Activated CD4-positive, alpha-beta T cell treated with anti-CD3 and anti-CD28 coated beads, Interleukin-2, amount 10 ng/mL, durations not matched to agents 24 days and 14 days (primary cell): ENCODE measurements at regions of chr1 and their contacts with region 1.

Region 1: DNA sequence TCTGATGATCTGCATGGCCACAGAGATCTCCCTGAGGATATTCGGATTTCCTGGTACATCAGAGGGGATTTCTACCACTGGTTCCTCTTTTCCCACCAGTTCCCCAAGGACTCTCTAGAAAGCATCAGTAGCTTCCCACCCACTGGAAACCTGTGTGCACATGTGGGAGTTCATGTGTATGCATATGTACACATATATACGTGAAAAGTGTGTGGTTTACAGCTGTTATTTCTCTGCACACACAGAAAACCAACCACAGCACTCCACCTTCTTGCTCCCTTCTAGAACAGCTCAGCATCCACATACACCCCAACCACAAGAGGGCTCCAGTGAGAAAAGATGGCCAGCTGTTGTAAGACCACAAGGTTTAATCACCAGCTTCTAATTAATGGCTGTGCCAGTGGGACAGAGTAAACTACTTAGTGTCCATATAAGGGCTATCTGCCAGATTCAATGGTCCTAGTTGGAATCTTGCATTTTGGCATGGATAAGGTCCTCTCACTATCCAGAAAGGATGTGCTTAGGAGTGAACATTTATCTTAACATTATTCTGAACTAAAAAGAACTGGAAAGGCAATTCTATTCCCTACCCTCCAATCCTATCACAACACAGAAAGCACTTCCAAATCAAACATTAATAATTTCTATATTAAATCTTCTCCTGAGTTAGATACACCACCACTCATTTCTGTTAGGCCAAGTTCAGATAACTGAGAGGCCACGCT is 24.1 kb downstream of the GPR3 start:
- DNase-seq: peak; percentile 87
- H3K4me3 Mint-ChIP-seq: no peak overlapping the region
- H3K27ac Mint-ChIP-seq: peak overlapping the region; percentile 14
- H3K4me1 Mint-ChIP-seq: peaks cover 28% of the 10 kb centered on the region
- H3K27me3 Mint-ChIP-seq: no peaks in the 10 kb centered on the region

Region 2: GRCh38 chr1:27430903-27431600 is 14.5 kb after region 1 on chr1:
- intact Hi-C with region 1: loop called (anchors 2 kb)
- DNase-seq: peak; percentile 80
- H3K4me3 Mint-ChIP-seq: peak overlapping the region; percentile 66
- H3K27ac Mint-ChIP-seq: peak overlapping the region; percentile 80
- H3K4me1 Mint-ChIP-seq: peaks cover 55% of the 10 kb centered on the region
- H3K27me3 Mint-ChIP-seq: no peaks in the 10 kb centered on the region

Region 3: DNA sequence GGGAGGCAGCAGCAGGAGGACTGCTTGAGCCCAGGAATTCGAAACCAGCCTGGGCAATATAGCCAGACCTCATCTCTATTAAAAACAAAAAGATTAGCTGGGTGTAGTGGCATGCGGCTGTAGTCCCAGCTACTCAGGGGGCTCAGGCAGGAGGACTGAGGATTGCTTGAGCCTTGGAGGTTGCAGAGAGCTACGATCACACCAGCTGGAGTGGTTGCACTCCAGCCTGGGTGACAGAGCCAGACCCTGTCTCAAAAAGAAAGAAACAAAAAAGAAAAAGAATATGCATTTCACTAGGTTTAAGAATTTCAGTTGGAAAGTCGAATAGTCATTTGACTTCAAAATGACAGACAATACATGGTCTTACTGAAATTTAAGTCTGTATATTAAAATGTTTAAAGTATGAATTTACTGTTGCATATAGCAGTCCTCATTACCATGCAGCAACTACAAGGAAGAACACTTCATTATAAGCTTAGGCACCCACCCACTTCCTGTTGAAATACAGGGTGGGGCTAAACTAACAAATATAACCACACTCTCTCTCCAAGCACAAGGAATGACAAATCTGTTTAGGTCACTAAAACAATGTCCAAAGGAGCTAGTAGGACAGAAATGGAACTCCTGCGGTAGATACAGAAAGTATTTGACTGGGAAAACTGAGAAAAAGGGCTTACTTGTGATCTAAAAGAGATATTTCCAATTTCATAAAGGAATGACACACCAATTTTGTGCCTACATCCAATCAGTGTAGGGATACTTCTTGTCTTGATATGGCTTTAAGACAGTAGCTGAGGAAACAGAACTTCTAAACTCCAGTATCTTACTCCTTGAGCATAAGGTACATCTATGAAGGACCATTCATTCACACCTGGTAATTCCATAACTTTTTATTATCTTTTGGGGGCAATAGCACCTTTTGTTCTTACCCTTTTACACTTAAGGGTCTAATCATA is 19.9 kb after region 1 on chr1:
- intact Hi-C with region 1: loop called (anchors 2 kb)
- DNase-seq: peak; percentile 70
- H3K4me3 Mint-ChIP-seq: peak overlapping the region; percentile 68
- H3K27ac Mint-ChIP-seq: peak overlapping the region; percentile 80
- H3K4me1 Mint-ChIP-seq: peaks cover 59% of the 10 kb centered on the region
- H3K27me3 Mint-ChIP-seq: no peaks in the 10 kb centered on the region

Region 4: DNA sequence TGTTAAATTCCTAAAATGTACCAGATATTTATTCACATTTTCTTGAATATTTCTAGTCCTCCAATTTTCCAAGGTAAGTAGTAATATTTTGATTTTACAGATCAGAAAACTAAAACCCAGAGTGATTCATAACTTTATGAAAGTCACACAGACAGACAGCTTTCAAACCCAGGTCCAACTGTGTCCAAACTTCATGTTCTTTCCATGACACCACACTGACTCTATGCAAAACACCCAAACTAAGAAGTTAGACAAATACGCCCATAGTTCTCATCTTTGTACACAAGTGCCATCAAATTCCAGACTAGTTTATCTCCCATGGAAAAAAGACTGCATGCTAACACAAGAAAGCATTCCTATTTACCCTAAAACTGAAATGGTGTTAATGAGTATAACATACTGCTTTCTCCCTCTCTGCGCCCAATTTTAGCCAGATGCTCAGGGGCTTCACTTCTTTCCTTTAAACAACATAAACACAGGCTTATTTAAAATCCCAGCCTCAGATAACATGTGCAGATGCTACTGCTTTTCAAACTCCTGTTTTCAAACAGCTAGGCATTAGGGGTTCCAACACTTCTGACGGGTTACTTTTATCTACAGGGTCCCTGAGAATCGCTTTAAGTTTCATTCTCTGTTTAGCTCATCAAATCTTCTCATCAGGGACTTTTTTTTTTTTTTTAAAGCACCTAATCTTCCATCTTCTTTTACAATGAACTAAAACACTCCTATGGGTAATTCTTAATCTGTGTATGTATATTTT is 28.8 kb after region 1 on chr1:
- intact Hi-C with region 1: loop called (anchors 1 kb)
- DNase-seq: peak; percentile 63
- H3K4me3 Mint-ChIP-seq: peak overlapping the region; percentile 70
- H3K27ac Mint-ChIP-seq: peak overlapping the region; percentile 97
- H3K4me1 Mint-ChIP-seq: peaks cover 34% of the 10 kb centered on the region
- H3K27me3 Mint-ChIP-seq: no peaks in the 10 kb centered on the region

Region 5: GRCh38 chr1:27489910-27490741 is 73.6 kb after region 1 on chr1 and contains the start of gene WASF2:
- intact Hi-C with region 1: loop called (anchors 2 kb)
- DNase-seq: peak; percentile 99
- H3K4me3 Mint-ChIP-seq: peak within 1 kb of the TSS; percentile 89
- H3K27ac Mint-ChIP-seq: peak within 1 kb of the TSS; percentile 99
- H3K4me1 Mint-ChIP-seq: peaks cover 25% of the 10 kb centered on the region
- H3K27me3 Mint-ChIP-seq: no peaks in the 10 kb centered on the region
- total RNA-seq, gene WASF2: 109 TPM in 2 replicates

Region 6: GRCh38 chr1:27603681-27604578 is 187.4 kb after region 1 on chr1 and contains the start of gene AHDC1:
- intact Hi-C with region 1: loop called (anchors 1 kb)
- DNase-seq: peak; percentile 98
- H3K4me3 Mint-ChIP-seq: peak within 1 kb of the TSS; percentile 99
- H3K27ac Mint-ChIP-seq: peak within 1 kb of the TSS; percentile 92
- H3K4me1 Mint-ChIP-seq: peaks cover 43% of the 10 kb centered on the region
- H3K27me3 Mint-ChIP-seq: no peaks in the 10 kb centered on the region
- total RNA-seq, gene AHDC1: 33.9 and 34.7 TPM in 2 replicates